Heart right ventricle (tissue), 16 donors: ENCODE measurements at regions of chr1 and their contacts with region 1.

Region 1: DNA sequence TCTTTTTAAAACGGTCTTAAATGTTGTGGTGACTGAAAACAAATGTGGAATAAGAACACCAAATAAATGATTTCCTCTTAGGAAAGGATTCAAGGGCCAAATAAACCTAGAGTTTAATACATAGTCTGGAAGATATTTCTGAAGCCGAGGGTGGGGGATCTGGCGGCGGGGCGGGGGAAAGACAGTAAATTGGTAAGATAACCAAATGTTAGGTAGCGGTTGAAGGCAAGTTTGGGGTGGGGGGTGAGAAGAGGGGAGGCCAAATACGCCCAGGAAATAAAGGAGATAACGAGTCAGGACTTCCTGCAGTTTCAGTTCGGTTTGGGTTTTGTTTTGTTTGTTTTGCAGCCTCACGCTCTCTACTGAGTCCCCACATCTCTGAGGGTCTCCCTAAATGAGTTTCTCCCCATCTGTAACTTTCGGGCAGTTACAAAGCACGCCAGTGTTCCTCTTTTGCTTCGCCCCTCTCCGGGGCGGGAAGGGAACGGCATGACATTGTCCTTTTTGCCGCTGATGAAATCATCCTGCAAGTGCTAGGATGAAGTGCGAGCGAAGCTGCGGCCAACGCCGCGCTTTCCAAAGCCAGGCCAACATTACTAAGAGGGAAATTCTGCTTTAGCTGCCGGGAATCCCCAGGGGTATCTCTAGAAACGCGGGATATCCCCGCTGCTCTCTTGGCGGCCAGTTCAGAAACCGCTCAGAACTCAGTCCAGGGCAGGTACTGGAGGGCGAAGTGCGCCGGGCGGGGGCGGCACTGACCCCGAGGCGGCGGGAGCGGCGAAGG is 844 bp downstream of the NIBAN1 start:
- DNase-seq: peak; percentile 49 to 52
- ATAC-seq: peak; percentile 52 to 77 (median 62)
- H3K4me3 ChIP-seq: peak overlapping the region; percentile 66 to 92 (median 76)
- H3K27ac ChIP-seq: peak overlapping the region; percentile 75 to 95 (median 90)
- H3K4me1 ChIP-seq: peaks cover 0 to 52% (median 22%) of the 10 kb centered on the region in 9 donors
- H3K27me3 ChIP-seq: no peaks in the 10 kb centered on the region
- CTCF ChIP-seq: peak in 1 of 9 donors; percentile 20

Region 2: DNA sequence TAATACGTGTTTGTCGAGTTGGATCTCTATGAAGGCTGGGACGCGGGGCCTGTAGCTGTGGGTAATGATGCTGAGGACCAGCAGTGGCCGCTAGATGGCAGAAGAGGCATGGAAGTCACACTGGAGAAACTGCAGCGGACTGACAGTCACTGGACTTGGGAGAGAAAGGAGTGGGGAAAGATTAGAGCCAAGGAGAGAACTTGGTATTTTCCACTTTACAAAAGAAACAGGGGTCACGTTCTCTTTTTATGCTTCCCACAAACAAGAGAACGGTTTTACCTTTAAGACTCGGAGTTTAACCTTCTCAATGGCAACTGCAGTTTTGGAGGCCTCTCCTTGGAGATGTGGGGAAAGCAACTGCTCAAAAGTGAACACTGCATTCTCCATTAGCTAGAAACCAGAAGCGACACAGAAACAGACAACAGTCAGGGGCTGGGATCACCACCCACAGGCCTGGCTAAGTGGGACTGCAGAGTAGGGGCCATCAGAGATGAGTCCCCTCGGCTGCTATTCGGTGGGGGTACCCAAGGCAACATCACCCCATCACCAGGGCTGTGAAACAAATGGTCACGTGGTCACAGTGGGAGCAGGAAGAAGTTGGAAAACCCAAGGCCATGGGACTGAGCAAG is 167.7 kb before region 1 on chr1:
- intact Hi-C with region 1: loop called in 2 of 10 experiments (anchors 2 kb)
- DNase-seq: peak; percentile 86 to 91
- ATAC-seq: peak; percentile 91 to 98 (median 95)
- H3K4me3 ChIP-seq: no peak overlapping the region
- H3K27ac ChIP-seq: peak overlapping the region in 8 of 10 donors; percentile 7 to 83 (median 41)
- H3K4me1 ChIP-seq: peaks cover 0 to 21% (median 9%) of the 10 kb centered on the region in 9 donors
- H3K27me3 ChIP-seq: no peaks in the 10 kb centered on the region
- CTCF ChIP-seq: peak; percentile 75 to 97 (median 92)

Region 3: GRCh38 chr1:184810735-184811343 is 162.6 kb before region 1 on chr1:
- intact Hi-C with region 1: loop called in 1 of 10 experiments (anchors 2 kb)
- DNase-seq: peak in 1 of 2 donors; percentile 54
- ATAC-seq: peak in 5 of 8 donors; percentile 34 to 60 (median 55)
- H3K4me3 ChIP-seq: no peak overlapping the region
- H3K27ac ChIP-seq: peak overlapping the region in 8 of 10 donors; percentile 11 to 73 (median 61)
- H3K4me1 ChIP-seq: peaks cover 4 to 33% (median 26%) of the 10 kb centered on the region in 9 donors
- H3K27me3 ChIP-seq: no peaks in the 10 kb centered on the region
- CTCF ChIP-seq: no peak

Region 4: GRCh38 chr1:184827600-184828368 is 145.7 kb before region 1 on chr1:
- intact Hi-C with region 1: loop called in 2 of 10 experiments (anchors 5 kb)
- DNase-seq: peak in 1 of 2 donors; percentile 41
- ATAC-seq: peak; percentile 73 to 91 (median 86)
- H3K4me3 ChIP-seq: no peak overlapping the region
- H3K27ac ChIP-seq: peak overlapping the region; percentile 76 to 94 (median 86)
- H3K4me1 ChIP-seq: peaks cover 6 to 75% (median 65%) of the 10 kb centered on the region in 9 donors
- H3K27me3 ChIP-seq: no peaks in the 10 kb centered on the region
- CTCF ChIP-seq: no peak

Region 5: DNA sequence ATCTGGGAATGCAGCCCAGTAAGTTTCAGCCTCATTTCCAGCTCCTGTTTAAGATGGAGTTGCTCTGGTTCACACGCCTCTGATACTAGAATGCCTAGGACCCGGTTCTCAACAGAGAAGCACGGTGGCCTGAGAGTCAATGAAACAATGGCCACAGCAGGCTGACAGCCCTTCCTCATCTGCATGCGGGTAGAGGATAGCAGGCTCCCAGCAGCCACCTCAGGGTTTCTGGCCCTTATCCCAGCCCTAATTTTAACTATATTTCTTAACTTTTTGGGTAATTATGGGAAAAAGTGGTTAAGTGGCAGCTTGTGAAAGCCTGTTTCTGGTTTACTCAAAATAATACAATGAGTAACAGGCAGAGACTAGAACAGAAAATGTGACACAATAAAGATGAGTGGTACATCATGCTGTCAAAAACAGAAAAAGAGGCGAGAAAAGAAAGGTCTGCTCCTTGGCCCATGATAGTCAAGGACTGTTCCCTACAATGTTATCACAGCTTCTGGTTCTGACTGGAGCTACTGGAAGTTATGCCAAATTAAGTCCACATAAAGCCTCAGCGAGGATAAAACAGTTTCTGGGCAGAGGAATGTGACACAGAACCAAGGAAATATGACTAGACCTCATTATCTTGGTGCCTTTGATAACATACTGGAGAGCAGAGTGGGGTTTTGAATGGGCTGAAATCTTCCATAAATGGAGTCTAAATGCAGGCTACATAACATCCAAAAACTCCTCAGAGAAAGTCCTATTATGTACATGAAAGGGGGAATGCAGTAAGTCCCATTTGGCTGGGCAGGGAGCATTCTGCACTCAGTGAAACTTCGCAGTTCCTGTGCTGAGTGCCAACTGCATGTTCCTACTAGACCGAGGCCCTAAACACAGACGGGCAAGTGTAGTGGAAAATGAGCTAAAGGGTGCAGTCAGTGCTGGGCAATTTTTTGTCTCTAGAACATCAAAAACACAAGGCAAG is 91.2 kb before region 1 on chr1:
- intact Hi-C with region 1: loop called in 4 of 10 experiments (anchors 5 to 10 kb)
- DNase-seq: no peak
- ATAC-seq: peak; percentile 56 to 84 (median 72)
- H3K4me3 ChIP-seq: no peak overlapping the region
- H3K27ac ChIP-seq: peak overlapping the region; percentile 57 to 92 (median 78)
- H3K4me1 ChIP-seq: peaks cover 0 to 97% (median 79%) of the 10 kb centered on the region in 9 donors
- H3K27me3 ChIP-seq: no peaks in the 10 kb centered on the region
- CTCF ChIP-seq: no peak

Region 6: GRCh38 chr1:184892116-184892515 is 81.3 kb before region 1 on chr1:
- intact Hi-C with region 1: loop called in 2 of 10 experiments (anchors 5 to 10 kb)
- DNase-seq: no peak
- ATAC-seq: no peak
- H3K4me3 ChIP-seq: no peak overlapping the region
- H3K27ac ChIP-seq: peak overlapping the region in 8 of 10 donors; percentile 56 to 92 (median 80)
- H3K4me1 ChIP-seq: peaks cover 0 to 85% (median 52%) of the 10 kb centered on the region in 9 donors
- H3K27me3 ChIP-seq: no peaks in the 10 kb centered on the region
- CTCF ChIP-seq: no peak

Region 7: GRCh38 chr1:184929711-184930631 is 43.5 kb before region 1 on chr1:
- intact Hi-C with region 1: no loop called
- DNase-seq: no peak
- ATAC-seq: peak in 3 of 8 donors; percentile 21 to 52 (median 26)
- H3K4me3 ChIP-seq: no peak overlapping the region
- H3K27ac ChIP-seq: peak overlapping the region in 2 of 10 donors; percentile 21 to 49
- H3K4me1 ChIP-seq: peaks cover 0 to 54% (median 33%) of the 10 kb centered on the region in 9 donors
- H3K27me3 ChIP-seq: no peaks in the 10 kb centered on the region
- CTCF ChIP-seq: no peak